ENCODE measurements at regions of chr21 and their contacts with region 1.

Region 1: DNA sequence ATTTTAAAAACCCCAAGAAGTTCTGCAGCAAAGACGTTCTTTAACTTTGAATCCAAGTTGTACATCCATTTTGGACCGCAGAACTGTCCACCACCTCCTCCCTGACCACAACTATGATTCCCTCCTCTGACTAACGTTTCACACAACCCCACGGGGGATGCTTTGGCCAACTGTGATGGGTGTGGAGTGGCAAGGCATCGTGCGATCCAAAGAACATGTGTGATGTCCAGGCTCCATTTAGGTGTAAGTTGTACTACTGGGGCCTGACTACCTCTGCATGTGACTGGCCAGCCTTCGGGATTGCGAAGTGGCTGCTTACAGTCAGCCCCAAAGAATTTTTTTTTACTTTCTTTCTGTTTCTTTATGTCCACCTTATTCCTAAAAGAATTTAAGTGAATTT is 6.7 kb downstream of the KCNJ15 start:
- DNase-seq: no peak
- H3K4me3 ChIP-seq: no peak overlapping the region
- H3K4me3 Mint-ChIP-seq: peak overlapping the region in 1 of 2 donors; percentile 19
- H3K27ac ChIP-seq: no peak overlapping the region
- H3K27ac Mint-ChIP-seq: peak overlapping the region in 2 of 7 donors; percentile 46 to 58
- H3K4me1 ChIP-seq: peaks cover 47 to 65% of the 10 kb centered on the region in 2 donors
- H3K4me1 Mint-ChIP-seq: peaks cover 64% of the 10 kb centered on the region
- H3K27me3 ChIP-seq: no peaks in the 10 kb centered on the region
- H3K27me3 Mint-ChIP-seq: peaks cover 0 to 1% (median 0%) of the 10 kb centered on the region in 3 donors
- CTCF ChIP-seq: no peak

Region 2: DNA sequence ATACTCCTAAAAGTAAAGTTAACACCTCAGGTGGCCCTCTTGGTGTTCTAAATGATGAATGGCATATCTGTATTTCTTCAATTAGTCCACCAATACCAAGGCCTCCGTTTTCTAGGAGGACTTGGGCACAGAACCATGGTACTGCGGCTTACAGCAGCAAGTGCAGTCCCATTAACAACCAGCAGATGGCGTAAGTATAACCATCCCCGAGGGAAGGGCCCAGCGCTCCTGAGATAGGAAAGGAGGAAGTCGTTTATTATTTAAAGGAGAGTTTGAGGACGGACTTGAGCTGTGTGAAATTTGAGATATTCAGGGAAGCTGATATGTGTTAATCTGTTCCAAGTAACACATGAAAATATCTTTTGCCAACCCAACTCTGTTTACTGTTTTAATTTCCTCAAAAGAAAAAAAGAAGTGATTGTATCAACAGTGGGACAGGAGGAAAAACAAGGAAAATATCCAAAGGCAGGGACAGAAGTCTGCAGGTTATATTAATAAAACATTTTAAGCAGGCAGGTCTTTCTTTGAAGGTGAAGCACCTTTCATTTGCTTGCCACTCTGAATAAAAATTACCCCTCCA is 44.4 kb before region 1 on chr21:
- intact Hi-C with region 1: loop called in 1 of 2 experiments (anchors 5 kb)
- DNase-seq: peak; percentile 83 to 88 (median 87)
- H3K4me3 ChIP-seq: no peak overlapping the region
- H3K4me3 Mint-ChIP-seq: peak overlapping the region in 1 of 2 donors; percentile 27
- H3K27ac ChIP-seq: peak overlapping the region in 1 of 2 donors; percentile 92
- H3K27ac Mint-ChIP-seq: peak overlapping the region; percentile 87 to 95 (median 90)
- H3K4me1 ChIP-seq: peaks cover 25 to 34% of the 10 kb centered on the region in 2 donors
- H3K4me1 Mint-ChIP-seq: peaks cover 27% of the 10 kb centered on the region
- H3K27me3 ChIP-seq: no peaks in the 10 kb centered on the region
- H3K27me3 Mint-ChIP-seq: peaks cover 0 to 4% (median 3%) of the 10 kb centered on the region in 3 donors
- CTCF ChIP-seq: peak; percentile 97

Measured in CD14-positive monocyte (primary cell).